PC-9 (cell line): ENCODE measurements at regions of chr21 and their contacts with region 1.

Region 1: DNA sequence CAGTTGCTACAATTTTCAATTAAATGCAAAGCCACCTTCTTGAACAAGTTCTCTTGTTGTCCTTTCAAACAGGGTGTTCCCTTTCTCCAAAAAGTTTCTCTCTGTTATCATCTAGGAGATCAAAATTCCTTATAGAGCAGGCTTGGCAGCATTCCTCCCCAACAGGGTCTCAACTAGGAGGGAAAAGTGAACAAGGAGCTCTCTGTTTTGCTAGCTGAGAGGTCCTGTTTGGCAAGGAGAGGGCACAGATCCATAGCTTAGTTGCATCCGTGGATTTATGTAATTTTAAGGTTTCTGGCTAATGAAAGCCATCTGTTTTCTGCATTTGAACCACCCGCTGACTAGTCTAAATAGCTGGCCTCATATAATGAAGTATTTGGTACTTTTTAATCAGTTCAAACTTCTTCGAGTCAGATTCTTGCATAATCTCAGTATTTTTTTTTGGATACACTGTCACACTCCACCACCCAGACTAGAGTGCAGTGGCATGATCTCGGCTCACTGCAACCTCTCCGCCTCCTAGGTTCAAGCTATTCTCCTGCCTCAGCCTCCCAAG is 54.0 kb downstream of the APP start:
- DNase-seq: peak; percentile 58 to 93
- H3K4me3 ChIP-seq: peak overlapping the region; percentile 12; the same call in 1 of the 2 replicates
- H3K27ac ChIP-seq: peak overlapping the region; percentile 85
- H3K4me1 ChIP-seq: peaks cover 37% of the 10 kb centered on the region
- H3K27me3 ChIP-seq: no peaks in the 10 kb centered on the region
- CTCF ChIP-seq: no peak

Region 2: DNA sequence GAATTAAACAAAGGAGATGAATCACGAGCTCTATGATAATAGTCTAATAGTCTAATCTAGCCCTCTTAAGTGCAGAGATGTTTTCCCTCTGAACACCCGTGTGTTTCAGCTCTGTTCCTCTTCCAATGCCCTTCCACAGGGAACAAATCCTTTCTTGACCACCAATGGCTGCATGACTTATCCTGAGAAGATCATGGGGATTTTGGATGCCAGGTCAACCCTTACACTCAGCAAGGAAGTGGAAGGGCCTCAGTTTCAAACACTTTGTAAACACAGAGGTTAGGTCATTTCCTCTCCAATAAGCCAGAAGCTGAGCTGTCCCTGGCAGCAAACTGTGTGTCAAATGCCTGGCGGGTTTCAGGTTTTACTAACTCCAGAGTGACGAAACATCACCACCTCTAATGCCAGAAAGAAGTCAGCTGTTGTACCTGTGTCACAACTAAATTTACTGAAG is 181.7 kb before region 1 on chr21:
- CTCF ChIA-PET with region 1: no interaction called
- POLR2A ChIA-PET with region 1: no interaction called
- intact Hi-C with region 1: loop called (anchors 1 kb)
- DNase-seq: peak; percentile 56 to 89
- H3K4me3 ChIP-seq: no peak overlapping the region
- H3K27ac ChIP-seq: peak overlapping the region; percentile 65
- H3K4me1 ChIP-seq: peaks cover 8% of the 10 kb centered on the region
- H3K27me3 ChIP-seq: no peaks in the 10 kb centered on the region
- CTCF ChIP-seq: no peak

Region 3: DNA sequence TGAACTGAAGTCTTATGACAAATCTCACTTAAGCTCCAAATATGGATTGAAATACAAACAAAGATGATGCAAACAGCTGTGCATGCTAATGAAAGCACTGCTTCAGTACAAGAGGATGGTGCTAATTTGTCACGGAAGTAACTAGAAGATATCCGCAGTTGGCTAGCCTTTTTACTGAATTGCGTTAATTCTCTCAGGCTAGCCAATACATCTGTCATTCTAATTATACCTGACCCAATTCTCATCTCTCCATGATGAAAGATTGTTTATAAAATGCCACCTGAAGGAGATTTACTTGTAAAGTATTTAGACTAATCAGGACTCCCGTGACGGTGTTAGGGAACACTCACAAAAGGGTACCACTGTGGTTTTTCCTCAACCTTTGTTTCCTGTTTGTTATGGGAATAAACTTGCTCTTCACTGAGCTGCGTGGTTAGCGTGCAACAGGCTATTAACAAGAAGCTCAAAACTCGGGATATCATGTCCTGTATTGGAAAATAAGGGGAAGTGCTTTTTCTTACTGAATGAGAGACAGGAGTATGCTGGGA is 108.5 kb before region 1 on chr21:
- CTCF ChIA-PET with region 1: no interaction called
- POLR2A ChIA-PET with region 1: no interaction called
- intact Hi-C with region 1: no loop called
- DNase-seq: no peak
- H3K4me3 ChIP-seq: no peak overlapping the region
- H3K27ac ChIP-seq: no peak overlapping the region
- H3K4me1 ChIP-seq: peaks cover 4% of the 10 kb centered on the region; the same call in 1 of the 2 replicates
- H3K27me3 ChIP-seq: no peaks in the 10 kb centered on the region
- CTCF ChIP-seq: no peak

Region 4: DNA sequence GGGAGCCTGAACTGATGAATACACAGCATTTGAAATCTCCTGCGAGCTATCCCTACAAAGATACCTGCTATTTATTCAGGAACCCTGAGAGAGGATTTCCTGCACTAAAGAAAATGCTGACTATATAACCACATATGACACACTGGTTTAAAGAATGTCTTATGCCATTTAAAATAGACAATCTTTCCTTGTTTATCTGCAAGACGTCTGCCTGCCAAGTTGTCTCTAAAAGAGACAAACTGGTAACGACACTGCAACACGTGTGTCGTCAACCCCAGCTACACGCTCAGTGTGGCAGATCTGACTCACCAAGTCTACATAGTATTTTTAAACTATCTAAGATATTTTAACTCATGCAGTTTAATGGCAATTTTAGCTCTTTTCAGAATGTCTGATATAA is 11.4 kb after region 1 on chr21:
- CTCF ChIA-PET with region 1: no interaction called
- POLR2A ChIA-PET with region 1: no interaction called
- intact Hi-C with region 1: no loop called
- DNase-seq: no peak
- H3K4me3 ChIP-seq: no peak overlapping the region
- H3K27ac ChIP-seq: no peak overlapping the region
- H3K4me1 ChIP-seq: 0 out of 2 replicates have a peak, but pooled peaks cover 5% of the 10 kb centered on the region
- H3K27me3 ChIP-seq: no peaks in the 10 kb centered on the region
- CTCF ChIP-seq: no peak

Region 5: GRCh38 chr21:26153758-26154157 is 37.2 kb after region 1 on chr21:
- CTCF ChIA-PET with region 1: interaction called, 12 read pairs
- POLR2A ChIA-PET with region 1: no interaction called
- intact Hi-C with region 1: no loop called
- DNase-seq: no peak
- H3K4me3 ChIP-seq: no peak overlapping the region
- H3K27ac ChIP-seq: no peak overlapping the region
- H3K4me1 ChIP-seq: 0 out of 2 replicates have a peak, but pooled peaks cover 7% of the 10 kb centered on the region
- H3K27me3 ChIP-seq: no peaks in the 10 kb centered on the region
- CTCF ChIP-seq: no peak

Region 6: DNA sequence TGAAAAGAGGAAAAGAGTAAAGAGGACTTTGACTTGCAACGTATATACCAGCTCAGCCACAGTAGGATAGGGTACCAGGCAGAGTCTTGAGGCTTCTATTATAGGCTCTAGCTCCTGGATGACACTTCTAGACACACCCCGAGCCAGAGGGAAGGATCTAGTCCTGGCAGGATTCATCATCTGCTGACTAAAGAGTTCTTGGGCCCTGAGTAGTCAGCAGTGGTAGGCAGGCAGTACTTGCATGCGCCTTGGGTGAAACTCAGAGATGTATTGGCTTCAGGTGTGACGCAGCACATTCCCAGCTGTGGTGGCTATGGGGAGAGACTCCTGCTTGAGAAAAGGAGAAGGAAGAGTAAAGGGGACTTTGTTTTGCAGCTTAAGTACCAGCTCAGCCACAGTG is 216.3 kb after region 1 on chr21:
- CTCF ChIA-PET with region 1: no interaction called
- POLR2A ChIA-PET with region 1: no interaction called
- intact Hi-C with region 1: no loop called
- DNase-seq: no peak
- H3K4me3 ChIP-seq: no peak overlapping the region
- H3K27ac ChIP-seq: no peak overlapping the region
- H3K4me1 ChIP-seq: no peaks in the 10 kb centered on the region
- H3K27me3 ChIP-seq: no peaks in the 10 kb centered on the region
- CTCF ChIP-seq: no peak